T-cell (primary cell): ENCODE measurements at regions of chr10 and their contacts with region 1.

Region 1: GRCh38 chr10:127755753-127756152 is 18.8 kb downstream of the FOXI2 start:
- DNase-seq: no peak
- ATAC-seq: no peak
- H3K4me3 ChIP-seq: no peak overlapping the region
- H3K4me3 Mint-ChIP-seq: no peak overlapping the region
- H3K27ac ChIP-seq: no peak overlapping the region
- H3K27ac Mint-ChIP-seq: no peak overlapping the region
- H3K4me1 ChIP-seq: no peaks in the 10 kb centered on the region
- H3K4me1 Mint-ChIP-seq: no peaks in the 10 kb centered on the region
- H3K27me3 ChIP-seq: peaks cover 0 to 7% of the 10 kb centered on the region in 2 experiments
- H3K27me3 Mint-ChIP-seq: peaks cover 4 to 12% of the 10 kb centered on the region in 2 donors

Region 2: GRCh38 chr10:127983344-127984100 is 227.8 kb after region 1 on chr10:
- CTCF ChIA-PET with region 1: no interaction called
- POLR2A ChIA-PET with region 1: interaction called in 1 of 2 experiments, 13 read pairs
- DNase-seq: no peak
- ATAC-seq: no peak
- H3K4me3 ChIP-seq: no peak overlapping the region
- H3K4me3 Mint-ChIP-seq: no peak overlapping the region
- H3K27ac ChIP-seq: no peak overlapping the region
- H3K27ac Mint-ChIP-seq: no peak overlapping the region
- H3K4me1 ChIP-seq: no peaks in the 10 kb centered on the region
- H3K4me1 Mint-ChIP-seq: peaks cover 8 to 10% (median 10%) of the 10 kb centered on the region in 3 donors
- H3K27me3 ChIP-seq: peaks cover 0 to 5% of the 10 kb centered on the region in 2 experiments
- H3K27me3 Mint-ChIP-seq: peaks cover 0 to 9% of the 10 kb centered on the region in 2 donors